ENCODE measurements at regions of chr7 and their contacts with region 1.

Region 1: DNA sequence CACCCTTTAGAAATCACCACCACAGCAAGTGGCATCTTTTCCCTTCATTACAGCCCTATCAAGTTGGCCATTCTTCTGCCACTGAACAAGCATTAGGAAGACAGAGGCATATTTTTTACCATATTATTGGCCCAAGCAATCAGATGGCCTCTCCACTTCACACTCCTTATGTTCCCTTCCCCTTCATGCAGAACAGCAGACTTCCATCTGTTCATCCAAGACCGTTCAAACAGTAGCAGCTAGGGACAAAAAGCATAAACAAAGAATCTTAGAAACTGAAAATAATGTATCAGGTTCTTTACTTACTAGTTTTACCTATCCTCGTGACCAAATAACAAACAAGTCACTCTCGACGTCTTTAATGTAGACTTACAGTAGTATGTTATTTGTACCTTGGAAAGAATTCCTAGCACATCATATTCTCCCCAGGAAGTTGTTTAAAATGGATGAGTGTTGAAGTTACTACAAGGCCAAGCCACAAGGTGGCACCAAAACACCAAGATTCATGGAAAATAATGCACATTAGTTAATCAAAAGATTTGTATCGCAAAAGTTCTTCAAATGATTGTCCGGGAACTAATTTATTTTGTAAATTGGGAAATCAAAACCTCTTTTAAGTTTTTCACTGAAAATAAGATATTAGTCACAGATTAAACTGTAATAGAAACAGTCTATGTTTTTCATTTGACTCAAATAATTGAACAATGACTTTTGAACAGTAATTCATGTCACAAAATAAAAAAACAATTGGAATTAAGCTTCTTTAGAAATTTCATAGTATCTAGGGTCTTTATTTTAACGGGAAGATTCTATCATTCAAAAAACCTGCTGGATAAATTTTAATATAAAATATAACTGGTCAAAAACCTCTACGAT is 112.1 kb downstream of the VPS41 start:
- DNase-seq: peak in 1 of 2 donors; percentile 50
- ATAC-seq: peak; percentile 52

Region 2: GRCh38 chr7:38206071-38206470 is 590.8 kb before region 1 on chr7:
- intact Hi-C with region 1: no loop called
- DNase-seq: no peak
- ATAC-seq: no peak

Region 3: DNA sequence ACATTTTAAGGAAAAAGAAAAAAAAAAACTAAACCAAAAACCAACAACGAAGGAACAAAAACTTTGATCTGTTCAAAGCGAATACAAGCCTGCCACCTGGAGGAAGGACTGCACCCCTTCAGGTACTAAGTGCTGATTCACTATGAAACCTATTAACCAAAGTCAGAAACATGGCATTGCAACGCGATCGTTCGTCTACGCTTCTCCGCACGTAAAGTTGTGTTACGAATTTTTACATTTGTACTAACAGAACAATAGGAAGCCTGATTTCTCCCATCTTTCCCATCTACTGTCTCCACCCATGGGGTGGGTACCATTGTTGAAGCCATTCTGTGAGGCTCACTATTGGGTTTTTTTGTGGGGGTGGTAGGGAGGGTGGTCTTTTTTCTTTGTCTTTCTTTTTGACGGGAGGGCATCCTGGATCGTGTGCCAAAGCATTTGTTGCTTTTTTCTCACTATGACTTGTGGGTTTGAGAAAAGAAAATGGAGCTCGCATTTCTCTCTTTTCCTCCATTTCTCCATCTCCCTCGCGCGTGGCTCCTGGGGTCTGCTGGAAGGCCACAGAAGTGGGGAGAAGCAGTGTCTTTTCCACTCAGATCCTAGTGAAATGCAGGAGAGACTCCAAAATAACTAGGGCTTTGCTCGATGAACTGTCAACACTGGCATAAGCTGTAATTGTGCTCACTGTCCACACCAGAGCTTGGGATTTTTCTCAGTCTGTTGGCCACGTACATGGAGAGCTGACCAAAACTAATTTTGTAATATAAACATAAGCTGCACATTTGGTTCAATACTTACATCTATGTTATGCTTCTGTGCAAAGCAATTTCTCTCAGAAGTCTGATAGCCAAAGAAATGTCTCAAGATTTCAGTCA is 668.4 kb after region 1 on chr7:
- intact Hi-C with region 1: loop called in 1 of 2 experiments (anchors 10 kb)
- DNase-seq: peak in 1 of 2 donors; percentile 57
- ATAC-seq: peak; percentile 89

Region 4: GRCh38 chr7:39527296-39527695 is 730.4 kb after region 1 on chr7:
- intact Hi-C with region 1: loop called in 1 of 2 experiments (anchors 10 kb)
- DNase-seq: no peak
- ATAC-seq: no peak

Measured in left colon (tissue), 2 donors.